Caco-2 (cell line): ENCODE measurements at regions of chr1 and their contacts with region 1.

Region 1: DNA sequence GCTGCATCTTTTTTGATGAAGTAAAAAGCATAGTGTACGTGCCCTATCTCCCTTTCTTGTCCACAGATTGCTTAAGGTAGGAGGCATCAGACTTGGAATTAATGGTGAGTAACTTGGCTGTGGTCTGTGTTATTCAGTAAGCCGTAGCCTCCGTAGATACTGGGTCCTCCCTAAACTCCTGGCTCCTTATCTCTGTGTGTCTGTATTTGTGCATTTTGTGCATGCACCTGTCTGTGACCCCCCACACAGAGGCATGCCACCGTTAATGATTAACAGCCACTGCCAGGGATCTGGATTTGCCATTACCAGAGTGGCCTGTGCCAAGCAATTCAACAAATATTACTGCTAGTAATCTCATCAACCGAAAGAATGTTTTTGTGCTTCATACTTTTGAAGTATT is 31.9 kb downstream of the MAP3K21 start:
- DNase-seq: peak; percentile 79 to 80
- H3K4me3 ChIP-seq: no peak overlapping the region
- H3K4me3 Mint-ChIP-seq: peak overlapping the region; percentile 54
- H3K27ac Mint-ChIP-seq: peak overlapping the region; percentile 33
- H3K4me1 ChIP-seq: peaks cover 11% of the 10 kb centered on the region
- H3K4me1 Mint-ChIP-seq: peaks cover 20% of the 10 kb centered on the region
- H3K27me3 ChIP-seq: no peaks in the 10 kb centered on the region
- H3K27me3 Mint-ChIP-seq: no peaks in the 10 kb centered on the region
- CTCF ChIP-seq: no peak

Region 2: DNA sequence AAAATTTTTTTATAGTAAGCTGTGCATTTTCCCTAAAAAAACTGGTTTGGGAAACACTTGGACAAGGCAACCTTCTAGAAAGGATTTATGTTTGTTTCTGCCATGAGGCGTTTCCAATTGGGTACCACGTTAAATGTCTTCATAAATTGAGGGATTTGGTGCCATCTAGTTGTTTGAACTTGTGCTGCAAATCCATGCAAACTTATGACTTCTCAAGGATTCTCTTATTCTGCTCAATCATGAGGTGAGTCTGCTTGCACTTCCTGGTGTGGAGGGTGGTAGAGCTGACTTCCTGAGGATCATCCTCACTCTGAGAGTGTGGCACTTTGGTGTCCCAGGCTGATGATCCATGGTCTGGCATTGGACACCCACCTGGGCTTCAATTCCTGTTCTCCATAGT is 187.2 kb before region 1 on chr1:
- CTCF ChIA-PET with region 1: no interaction called
- POLR2A ChIA-PET with region 1: no interaction called
- intact Hi-C with region 1: no loop called
- DNase-seq: peak in 1 of 2 experiments; percentile 3
- H3K4me3 ChIP-seq: no peak overlapping the region
- H3K4me3 Mint-ChIP-seq: no peak overlapping the region
- H3K27ac Mint-ChIP-seq: no peak overlapping the region
- H3K4me1 ChIP-seq: no peaks in the 10 kb centered on the region
- H3K4me1 Mint-ChIP-seq: no peaks in the 10 kb centered on the region
- H3K27me3 ChIP-seq: no peaks in the 10 kb centered on the region
- H3K27me3 Mint-ChIP-seq: no peaks in the 10 kb centered on the region
- CTCF ChIP-seq: peak in 1 of 2 experiments; percentile 7

Region 3: DNA sequence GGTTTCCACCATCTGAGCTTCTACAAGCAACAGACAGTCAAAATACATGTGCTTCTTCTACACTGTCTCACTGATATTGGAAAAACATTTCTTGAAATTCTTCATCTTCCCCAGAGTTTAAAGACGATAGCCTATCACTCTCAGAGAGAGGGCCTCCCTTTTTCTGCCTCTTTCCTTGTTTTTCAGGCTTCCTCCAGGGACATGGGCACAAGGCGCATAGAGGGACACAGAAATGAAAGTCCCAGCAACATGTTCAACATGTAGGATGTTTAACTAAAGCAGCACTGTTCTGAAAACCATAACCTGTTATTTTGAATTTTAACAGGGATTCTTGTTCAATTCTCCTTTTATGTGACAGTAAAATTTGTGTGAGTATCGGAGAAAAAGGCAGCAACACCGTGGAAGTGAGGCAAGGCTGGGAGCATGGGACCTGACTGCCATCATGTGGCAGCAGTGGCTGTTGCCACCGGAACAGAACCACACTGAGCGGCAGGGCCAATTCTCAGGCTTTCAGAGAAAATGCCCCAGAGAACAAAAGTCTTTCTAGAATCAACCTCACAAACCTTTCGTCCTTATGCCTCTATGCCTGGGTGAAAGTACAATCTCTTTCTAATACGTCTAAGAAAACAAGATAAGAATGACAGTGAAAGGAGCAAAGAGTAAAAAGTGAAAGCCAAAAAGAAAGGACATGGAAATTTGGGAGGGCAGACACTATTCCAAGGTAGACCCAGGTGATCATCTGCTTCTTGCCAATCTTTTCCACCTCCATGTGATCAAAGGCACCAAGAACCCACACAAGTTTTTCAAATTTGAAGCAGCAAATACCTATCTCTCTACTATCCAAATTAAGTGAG is 118.4 kb before region 1 on chr1:
- CTCF ChIA-PET with region 1: no interaction called
- POLR2A ChIA-PET with region 1: no interaction called
- intact Hi-C with region 1: no loop called
- DNase-seq: peak; percentile 64 to 66
- H3K4me3 ChIP-seq: no peak overlapping the region
- H3K4me3 Mint-ChIP-seq: peak overlapping the region; percentile 33
- H3K27ac Mint-ChIP-seq: peak overlapping the region; percentile 35
- H3K4me1 ChIP-seq: peaks cover 47% of the 10 kb centered on the region
- H3K4me1 Mint-ChIP-seq: peaks cover 25% of the 10 kb centered on the region
- H3K27me3 ChIP-seq: no peaks in the 10 kb centered on the region
- H3K27me3 Mint-ChIP-seq: no peaks in the 10 kb centered on the region
- CTCF ChIP-seq: peak; percentile 57 to 83

Region 4: GRCh38 chr1:233315718-233316301 is 43.6 kb before region 1 on chr1:
- CTCF ChIA-PET with region 1: no interaction called
- POLR2A ChIA-PET with region 1: no interaction called
- intact Hi-C with region 1: no loop called
- DNase-seq: no peak
- H3K4me3 ChIP-seq: no peak overlapping the region
- H3K4me3 Mint-ChIP-seq: no peak overlapping the region
- H3K27ac Mint-ChIP-seq: no peak overlapping the region
- H3K4me1 ChIP-seq: no peaks in the 10 kb centered on the region
- H3K4me1 Mint-ChIP-seq: no peaks in the 10 kb centered on the region
- H3K27me3 ChIP-seq: no peaks in the 10 kb centered on the region
- H3K27me3 Mint-ChIP-seq: peaks cover 15% of the 10 kb centered on the region
- CTCF ChIP-seq: no peak

Region 5: DNA sequence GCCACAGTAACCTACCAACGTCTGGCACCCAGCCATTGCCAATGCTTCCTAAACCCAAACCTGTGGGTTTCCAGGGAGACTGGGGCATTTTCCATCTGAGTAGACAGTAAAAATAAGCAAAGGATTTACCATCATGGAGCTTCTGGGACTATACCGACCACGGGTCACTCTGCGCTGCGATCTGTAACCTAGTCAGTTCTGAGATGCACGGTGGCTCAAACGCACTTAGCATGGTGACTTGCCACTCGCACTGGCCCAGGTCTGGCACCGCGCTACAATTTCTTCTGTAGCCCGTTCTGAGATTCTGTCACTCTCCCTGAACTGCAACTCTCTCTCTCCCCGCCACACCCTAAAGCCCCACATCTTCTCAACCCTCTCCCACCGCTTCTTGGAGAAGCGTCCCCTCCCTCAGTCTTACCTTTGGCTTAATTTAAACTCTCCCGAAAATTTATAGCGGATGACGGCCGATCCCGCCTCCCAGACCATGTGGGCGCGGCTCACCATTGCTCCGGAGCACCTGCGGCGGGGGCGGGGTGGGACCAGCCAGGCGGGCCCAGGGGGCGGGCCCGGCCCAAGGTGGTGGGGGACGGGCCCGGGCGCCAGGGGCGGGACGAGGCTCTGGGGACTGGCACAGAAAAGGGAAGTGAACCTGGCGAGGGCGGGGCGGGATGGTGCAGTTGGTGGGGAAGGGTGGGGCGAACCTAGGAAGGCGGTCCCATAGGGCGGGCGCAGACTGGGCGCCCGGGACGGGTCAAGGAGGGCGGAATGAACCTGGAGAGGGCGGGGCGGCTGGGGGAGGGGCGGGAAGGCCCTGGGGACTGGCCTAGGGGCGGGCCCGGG is 32.4 kb before region 1 on chr1:
- CTCF ChIA-PET with region 1: no interaction called
- POLR2A ChIA-PET with region 1: no interaction called
- intact Hi-C with region 1: loop called (anchors 1 kb)
- DNase-seq: peak; percentile 94 to 96
- H3K4me3 ChIP-seq: peak overlapping the region; percentile 86
- H3K4me3 Mint-ChIP-seq: peak overlapping the region; percentile 88
- H3K27ac Mint-ChIP-seq: no peak overlapping the region
- H3K4me1 ChIP-seq: peaks cover 10% of the 10 kb centered on the region
- H3K4me1 Mint-ChIP-seq: peaks cover 4% of the 10 kb centered on the region
- H3K27me3 ChIP-seq: 0 out of 2 replicates have a peak, but pooled peaks cover 2% of the 10 kb centered on the region
- H3K27me3 Mint-ChIP-seq: peaks cover 2% of the 10 kb centered on the region
- CTCF ChIP-seq: no peak